Activated CD4-positive, alpha-beta T cell treated with anti-CD3 and anti-CD28 coated beads, Interleukin-2, amount 10 ng/mL, durations not matched to agents 24 days and 14 days (primary cell): ENCODE measurements at regions of chr16 and their contacts with region 1.

Region 1: DNA sequence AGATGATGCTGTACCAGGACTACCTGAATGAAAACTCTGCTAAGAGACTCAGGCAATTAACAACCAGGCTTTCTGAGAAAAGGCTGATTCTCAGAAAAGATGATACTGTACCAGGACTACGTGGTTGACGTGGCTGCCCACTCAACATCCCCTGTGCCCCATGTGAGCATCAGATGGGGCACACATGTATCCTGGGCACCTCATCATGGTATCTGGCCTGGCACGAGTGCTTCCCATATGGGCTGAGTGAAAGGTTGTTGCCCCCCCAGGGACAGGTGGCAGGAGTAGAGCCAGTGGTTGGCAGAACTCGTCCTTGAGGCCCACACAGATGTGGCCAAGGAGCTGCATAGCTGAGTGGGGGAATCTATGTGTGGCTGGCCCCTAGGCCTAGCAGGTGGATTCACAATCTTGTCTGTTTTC is 3.5 kb upstream of the CES4A start:
- DNase-seq: peak; percentile 86
- H3K4me3 Mint-ChIP-seq: peak overlapping the region; percentile 61
- H3K27ac Mint-ChIP-seq: peak overlapping the region; percentile 97
- H3K4me1 Mint-ChIP-seq: peaks cover 57% of the 10 kb centered on the region
- H3K27me3 Mint-ChIP-seq: no peaks in the 10 kb centered on the region

Region 2: GRCh38 chr16:67000384-67001351 is 15.8 kb after region 1 on chr16:
- intact Hi-C with region 1: loop called (anchors 1 kb)
- DNase-seq: peak; percentile 89
- H3K4me3 Mint-ChIP-seq: peak overlapping the region; percentile 82
- H3K27ac Mint-ChIP-seq: peak overlapping the region; percentile 89
- H3K4me1 Mint-ChIP-seq: peaks cover 37% of the 10 kb centered on the region
- H3K27me3 Mint-ChIP-seq: no peaks in the 10 kb centered on the region

Region 3: DNA sequence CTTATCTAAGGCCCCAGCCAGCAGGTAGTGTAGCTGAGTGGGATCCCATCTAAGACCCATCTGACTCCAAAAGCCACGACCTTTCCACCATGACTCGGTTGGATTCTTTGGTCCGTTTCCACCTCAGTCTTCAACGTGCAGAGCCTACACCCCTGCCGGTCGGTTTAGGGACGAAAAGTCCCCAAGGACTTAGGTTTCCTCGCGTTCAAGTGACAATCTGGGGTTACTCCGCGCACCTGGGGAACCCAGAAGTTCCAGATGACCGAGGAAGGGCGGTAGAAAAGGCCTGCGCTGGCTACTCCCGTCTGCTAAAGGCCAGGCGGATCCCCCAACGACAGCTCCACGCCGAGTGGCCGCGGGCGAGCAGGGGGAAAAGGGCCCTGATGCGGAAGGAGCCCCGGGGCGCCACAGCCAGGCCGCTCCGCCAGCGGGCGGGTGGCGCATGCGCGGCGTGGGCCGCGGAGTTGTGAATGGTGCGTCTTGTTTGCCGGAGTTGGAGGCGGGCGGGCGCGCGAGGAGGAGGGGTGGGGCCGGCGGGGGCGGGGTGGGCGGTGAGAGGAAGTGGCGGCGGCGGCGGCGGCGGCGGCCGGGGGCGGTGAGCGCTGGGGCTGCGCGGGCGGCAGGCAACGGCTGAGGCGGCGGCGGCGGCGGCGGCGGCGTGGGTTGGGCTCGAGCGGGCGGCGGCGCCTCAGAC is 43.8 kb after region 1 on chr16 and contains the start of gene CBFB:
- intact Hi-C with region 1: loop called (anchors 1 kb)
- DNase-seq: peak; percentile 98
- H3K4me3 Mint-ChIP-seq: peak within 1 kb of the TSS; percentile 96
- H3K27ac Mint-ChIP-seq: peak within 1 kb of the TSS; percentile 95
- H3K4me1 Mint-ChIP-seq: peaks cover 53% of the 10 kb centered on the region
- H3K27me3 Mint-ChIP-seq: no peaks in the 10 kb centered on the region
- total RNA-seq, gene CBFB: 163 and 172 TPM in 2 replicates

Region 4: GRCh38 chr16:67129422-67129821 is 144.5 kb after region 1 on chr16:
- intact Hi-C with region 1: no loop called
- DNase-seq: no peak
- H3K4me3 Mint-ChIP-seq: no peak overlapping the region
- H3K27ac Mint-ChIP-seq: no peak overlapping the region
- H3K4me1 Mint-ChIP-seq: peaks cover 4% of the 10 kb centered on the region
- H3K27me3 Mint-ChIP-seq: no peaks in the 10 kb centered on the region